H1 (cell line): ENCODE measurements at regions of chr17 and their contacts with region 1.

Region 1: GRCh38 chr17:80035943-80036714 is at the start of gene CCDC40:
- DNase-seq: peak in 1 of 2 experiments; percentile 91
- H3K4me3 ChIP-seq: peak within 1 kb of the TSS; percentile 61 to 89 (median 78)
- H3K27ac ChIP-seq: peak within 1 kb of the TSS; percentile 87
- H3K4me1 ChIP-seq: peaks cover 0 to 3% (median 1%) of the 10 kb centered on the region in 4 experiments; a peak in 3 of 7 replicates
- H3K27me3 ChIP-seq: no peaks in the 10 kb centered on the region
- CTCF ChIP-seq: no peak
- EP300 ChIP-seq: no peak
- POLR2A ChIP-seq: peak; percentile 50 to 86
- RAD21 ChIP-seq: no peak
- total RNA-seq, gene CCDC40: 11.5 and 11.6 TPM in 2 replicates

Region 2: DNA sequence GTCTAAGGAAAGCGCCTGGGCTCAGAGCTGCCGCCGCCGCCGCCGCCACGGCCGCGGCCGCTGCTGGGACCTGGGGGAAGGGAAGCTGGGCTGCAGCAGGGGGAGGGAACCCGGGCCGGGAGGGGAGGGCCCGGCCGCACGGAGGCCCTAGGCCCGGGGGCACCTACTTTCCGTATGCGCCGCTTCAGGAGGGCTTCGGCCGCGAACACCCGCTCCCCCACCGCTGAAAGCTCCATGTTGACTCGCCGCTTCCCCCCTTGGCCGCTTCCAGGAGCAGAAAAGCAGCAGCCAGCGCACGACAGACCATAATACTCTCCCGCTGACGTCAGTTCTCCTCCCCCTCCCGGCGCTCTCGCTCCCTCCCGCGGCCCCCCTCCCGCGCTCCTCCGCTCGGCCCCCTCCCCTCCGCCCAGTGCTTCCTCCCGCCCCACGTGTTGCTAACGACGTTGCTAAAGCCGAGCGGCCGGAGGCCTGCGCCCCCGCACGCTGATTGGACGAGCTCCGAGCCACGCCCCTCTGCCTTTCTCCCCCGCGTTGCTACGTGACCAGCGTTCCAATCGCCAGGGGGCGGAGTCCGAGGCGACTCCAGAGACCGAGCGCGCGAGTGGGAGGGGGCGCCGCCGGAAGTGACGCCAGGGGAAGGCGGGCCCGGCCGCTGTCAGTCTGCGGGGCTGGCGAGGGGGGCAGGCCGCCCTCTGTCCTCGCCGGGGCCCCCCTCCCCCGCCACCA is 239.2 kb before region 1 on chr17 and contains the start of gene CBX8:
- CTCF ChIA-PET with region 1: no interaction called
- POLR2A ChIA-PET with region 1: no interaction called
- DNase-seq: peak; percentile 99 to 100
- H3K4me3 ChIP-seq: peak within 1 kb of the TSS; percentile 44 to 67 (median 53)
- H3K27ac ChIP-seq: peak within 1 kb of the TSS; percentile 66; the same call in 1 of the 2 replicates
- H3K4me1 ChIP-seq: peaks cover 8 to 58% (median 38%) of the 10 kb centered on the region in 4 experiments
- H3K27me3 ChIP-seq: peaks cover 80 to 92% (median 90%) of the 10 kb centered on the region in 4 experiments
- CTCF ChIP-seq: no peak
- EP300 ChIP-seq: peak in 1 of 2 experiments; percentile 59; a peak in 1 of 3 replicates
- POLR2A ChIP-seq: peak in 1 of 2 experiments; percentile 43; a peak in 1 of 3 replicates
- RAD21 ChIP-seq: no peak
- total RNA-seq, gene CBX8: 1.5 and 2.1 TPM in 2 replicates

Region 3: GRCh38 chr17:80023481-80024205 is 12.5 kb before region 1 on chr17:
- CTCF ChIA-PET with region 1: interaction called, 3 read pairs
- POLR2A ChIA-PET with region 1: interaction called, 24 read pairs
- DNase-seq: no peak
- H3K4me3 ChIP-seq: no peak overlapping the region
- H3K27ac ChIP-seq: no peak overlapping the region
- H3K4me1 ChIP-seq: peaks cover 0 to 5% (median 0%) of the 10 kb centered on the region in 4 experiments; a peak in 5 of 7 replicates
- H3K27me3 ChIP-seq: no peaks in the 10 kb centered on the region; a peak in 1 of 7 replicates
- CTCF ChIP-seq: no peak
- EP300 ChIP-seq: no peak
- POLR2A ChIP-seq: no peak
- RAD21 ChIP-seq: no peak